AG04449 (cell line): ENCODE measurements at regions of chr17 and their contacts with region 1.

Region 1: GRCh38 chr17:28252436-28252835 is 66.6 kb upstream of the TMEM97 start:
- DNase-seq: no peak
- H3K4me3 ChIP-seq: no peak overlapping the region
- CTCF ChIP-seq: no peak

Region 2: DNA sequence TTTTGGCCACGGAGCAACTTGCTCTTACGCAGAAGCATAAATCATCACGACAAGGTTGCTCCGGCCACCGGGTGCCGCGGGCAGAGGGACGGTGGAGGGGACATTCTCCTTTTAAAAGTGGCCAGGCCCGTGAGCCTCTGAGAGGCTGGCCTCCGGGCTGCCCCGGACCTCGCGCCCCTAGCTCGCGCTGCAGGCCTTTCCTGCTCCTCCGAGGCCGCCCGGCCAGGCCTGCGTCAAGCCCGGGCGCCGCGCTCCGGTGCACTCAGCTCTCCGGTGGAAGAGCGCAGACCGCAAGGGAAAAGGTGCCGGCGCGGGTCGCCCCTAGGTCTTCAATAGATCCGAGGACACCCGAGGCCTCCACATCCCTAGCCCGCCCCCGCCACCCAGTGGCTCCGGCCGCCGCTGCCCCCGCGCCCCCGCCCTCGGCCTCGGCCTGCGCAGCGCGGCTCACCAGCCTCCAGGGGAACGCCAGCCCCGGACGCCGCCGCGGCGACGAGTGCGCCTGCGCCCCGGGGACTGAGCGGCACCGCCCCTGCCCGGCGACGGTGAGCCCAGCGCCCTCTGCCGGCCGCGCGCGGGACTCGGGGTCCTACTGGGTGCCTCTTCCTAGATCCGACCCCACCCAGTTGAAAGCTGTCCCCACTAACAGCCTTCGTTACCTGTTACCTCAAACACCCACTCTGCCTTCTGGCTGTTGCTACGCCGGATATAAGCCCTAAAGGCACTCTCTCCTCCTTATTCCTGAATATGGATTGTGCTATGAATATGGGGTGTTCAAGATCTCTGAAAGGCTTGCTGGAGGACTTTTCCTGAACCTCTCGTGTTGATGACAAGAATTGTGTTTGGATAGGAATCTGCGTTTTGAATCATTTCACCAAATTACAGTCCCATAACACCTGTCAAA is 359.3 kb before region 1 on chr17 and contains the start of gene LYRM9:
- CTCF ChIA-PET with region 1: interaction called, 17 read pairs
- POLR2A ChIA-PET with region 1: no interaction called
- DNase-seq: no peak
- H3K4me3 ChIP-seq: peak within 1 kb of the TSS; percentile 66
- CTCF ChIP-seq: peak; percentile 86

Region 3: GRCh38 chr17:28240991-28241340 is 11.5 kb before region 1 on chr17:
- CTCF ChIA-PET with region 1: interaction called, 18 read pairs
- POLR2A ChIA-PET with region 1: no interaction called
- DNase-seq: no peak
- H3K4me3 ChIP-seq: no peak overlapping the region
- CTCF ChIP-seq: no peak

Region 4: DNA sequence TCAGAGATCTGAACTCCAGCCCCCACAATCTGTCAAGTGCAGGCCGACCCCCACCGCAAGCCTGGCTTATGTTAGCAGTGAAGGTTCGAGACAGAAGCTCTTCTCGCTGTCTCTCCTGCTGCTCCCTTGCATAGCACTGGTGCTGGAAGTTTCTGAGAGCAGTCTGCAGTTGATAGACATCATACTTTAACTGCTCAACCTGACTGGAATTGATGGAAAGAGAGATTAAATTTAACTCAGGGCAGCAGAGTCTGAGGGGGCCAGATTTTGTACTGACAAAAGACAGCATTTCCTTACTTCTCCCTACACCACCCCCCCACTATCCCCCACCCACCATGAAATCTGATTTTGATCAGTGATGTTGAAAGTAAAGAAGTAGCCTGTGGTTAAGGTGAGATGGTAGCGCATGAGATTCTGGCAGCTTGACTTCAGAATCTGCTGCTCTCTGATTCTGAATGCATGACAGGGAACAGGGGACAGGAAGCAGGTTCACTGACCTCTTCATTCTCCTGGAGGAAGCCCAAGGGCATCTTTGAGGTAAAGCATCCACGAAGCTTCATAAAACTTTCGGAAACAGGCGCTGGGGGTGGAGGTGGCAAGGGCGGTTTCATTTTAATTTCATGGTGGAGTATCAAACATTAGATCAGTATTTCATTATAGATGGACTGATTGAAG is 22.3 kb after region 1 on chr17:
- CTCF ChIA-PET with region 1: interaction called, 23 read pairs
- POLR2A ChIA-PET with region 1: no interaction called
- DNase-seq: no peak
- H3K4me3 ChIP-seq: no peak overlapping the region
- CTCF ChIP-seq: no peak

Region 5: DNA sequence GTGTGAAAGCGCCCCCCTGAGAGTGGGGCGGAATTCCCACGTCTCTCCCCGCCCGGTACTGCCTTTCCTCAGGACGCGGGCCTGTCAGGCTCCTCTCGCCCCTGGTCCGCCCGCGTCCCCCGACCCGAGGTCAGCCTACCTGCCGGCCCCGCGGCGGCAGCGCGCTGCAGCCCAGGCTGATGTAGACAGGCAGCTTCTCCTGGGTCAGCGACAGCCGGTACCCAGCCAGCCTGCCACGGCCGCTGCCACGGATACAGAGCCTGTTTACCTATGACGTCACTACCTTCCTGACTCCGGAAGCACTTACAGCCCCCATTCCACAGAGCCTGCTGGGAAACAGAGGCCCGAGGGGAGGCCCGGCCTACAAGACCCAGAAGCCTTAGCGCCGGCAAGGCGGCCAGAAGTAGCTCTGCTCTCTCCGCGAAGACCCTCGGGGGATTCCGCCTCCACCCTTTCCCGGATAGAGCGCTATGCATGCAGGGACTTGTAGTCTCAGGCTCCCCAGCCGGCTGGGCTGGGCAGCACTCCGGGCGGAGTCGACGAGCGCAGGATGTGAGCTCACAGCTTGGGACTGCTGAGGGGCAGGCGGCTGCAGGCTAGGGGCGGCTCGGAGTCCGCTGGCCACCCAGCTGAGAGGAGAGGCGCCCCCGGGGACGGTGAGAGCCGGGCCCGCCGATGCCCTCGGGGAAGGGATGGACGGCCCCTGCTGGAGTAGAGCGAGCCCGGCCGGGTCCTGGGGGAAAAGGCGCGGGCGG is 82.9 kb after region 1 on chr17 and contains the starts of genes IFT20 and TNFAIP1:
- CTCF ChIA-PET with region 1: interaction called, 11 read pairs
- POLR2A ChIA-PET with region 1: no interaction called
- DNase-seq: peak; percentile 100
- H3K4me3 ChIP-seq: peak within 1 kb of the TSS; percentile 83
- CTCF ChIP-seq: peak; percentile 4